PC-9 (cell line): ENCODE measurements at regions of chr12 and their contacts with region 1.

Region 1: GRCh38 chr12:98516184-98516873 is 939 bp downstream of the TMPO start:
- DNase-seq: peak; percentile 65 to 80
- H3K4me3 ChIP-seq: peak overlapping the region; percentile 90
- H3K27ac ChIP-seq: peak overlapping the region; percentile 74
- H3K4me1 ChIP-seq: peaks cover 24% of the 10 kb centered on the region
- H3K27me3 ChIP-seq: no peaks in the 10 kb centered on the region
- CTCF ChIP-seq: peak; percentile 74

Region 2: DNA sequence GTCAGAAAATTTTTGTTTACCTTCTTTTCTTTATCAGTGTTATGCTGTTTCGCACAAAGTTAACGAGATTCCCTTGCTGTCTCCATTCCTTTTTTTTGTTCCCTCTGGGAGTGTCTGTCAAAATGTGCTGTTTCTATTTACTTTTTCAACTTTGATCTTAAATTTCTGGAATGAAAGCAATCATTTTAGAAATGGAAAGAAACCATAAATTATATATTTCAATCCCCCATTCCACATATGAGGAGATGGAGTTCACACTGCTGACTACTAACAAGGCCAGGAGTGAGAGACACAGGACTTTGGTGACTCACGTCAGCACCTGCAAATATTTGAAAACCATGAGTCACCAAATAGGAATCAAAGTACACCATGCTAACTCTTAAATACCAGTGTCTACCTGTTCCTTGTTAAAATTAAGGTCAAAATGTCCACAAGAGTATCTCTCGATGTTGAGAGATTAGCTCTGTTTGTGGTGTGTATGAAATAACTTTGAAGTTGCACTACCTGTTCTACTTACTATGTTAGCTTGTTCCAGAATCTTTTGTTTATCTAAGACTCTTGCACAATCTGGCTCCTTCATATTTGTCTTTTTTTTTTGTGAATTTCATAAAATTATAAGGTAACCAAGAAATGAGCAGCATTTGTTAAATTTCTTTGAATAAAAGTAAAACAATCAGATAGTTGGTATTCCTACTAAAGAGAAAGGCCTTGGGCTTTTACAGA is 947.7 kb before region 1 on chr12:
- CTCF ChIA-PET with region 1: no interaction called
- POLR2A ChIA-PET with region 1: interaction called, 34 read pairs
- intact Hi-C with region 1: no loop called
- DNase-seq: peak; percentile 57 to 99
- H3K4me3 ChIP-seq: peak overlapping the region; percentile 17; the same call in 1 of the 2 replicates
- H3K27ac ChIP-seq: peak overlapping the region; percentile 75
- H3K4me1 ChIP-seq: peaks cover 51% of the 10 kb centered on the region
- H3K27me3 ChIP-seq: no peaks in the 10 kb centered on the region
- CTCF ChIP-seq: no peak

Region 3: DNA sequence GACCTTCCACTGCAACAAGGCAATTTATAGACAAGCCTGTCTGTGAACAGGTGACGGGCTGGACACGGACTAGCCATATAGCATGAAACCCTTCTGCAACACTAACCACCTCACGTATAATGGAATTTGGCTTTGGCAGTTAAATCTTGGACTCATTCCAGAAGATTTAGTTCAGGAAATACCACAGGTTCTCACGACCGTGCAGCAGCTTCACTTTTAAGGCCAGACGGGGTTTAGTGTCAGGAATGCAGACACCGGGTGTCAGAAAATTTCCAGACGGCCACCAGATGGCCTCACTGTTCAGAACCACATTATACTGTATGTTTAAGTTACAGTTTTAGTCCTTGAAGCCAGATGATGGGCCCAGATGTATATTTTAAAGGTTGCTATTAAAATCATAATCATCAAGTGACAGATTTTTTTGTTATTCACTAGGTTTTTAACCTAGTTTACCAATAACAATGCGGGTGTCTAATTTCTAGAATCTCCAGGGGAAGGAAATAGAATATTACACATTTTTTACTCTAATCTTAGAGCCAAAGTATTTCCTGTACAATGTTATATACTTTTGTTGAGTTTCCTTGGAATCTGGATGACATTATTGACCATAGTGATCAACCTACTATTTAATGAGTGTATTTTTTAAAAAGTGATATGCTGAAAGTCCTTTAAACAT is 91.5 kb before region 1 on chr12:
- CTCF ChIA-PET with region 1: interaction called, 4 read pairs
- POLR2A ChIA-PET with region 1: no interaction called
- intact Hi-C with region 1: loop called (anchors 1 kb)
- DNase-seq: peak; percentile 83 to 91
- H3K4me3 ChIP-seq: no peak overlapping the region
- H3K27ac ChIP-seq: 0 out of 2 replicates have a peak overlapping the region, but pooled peaks have one; percentile 16
- H3K4me1 ChIP-seq: peaks cover 6% of the 10 kb centered on the region
- H3K27me3 ChIP-seq: no peaks in the 10 kb centered on the region
- CTCF ChIP-seq: peak; percentile 78

Region 4: DNA sequence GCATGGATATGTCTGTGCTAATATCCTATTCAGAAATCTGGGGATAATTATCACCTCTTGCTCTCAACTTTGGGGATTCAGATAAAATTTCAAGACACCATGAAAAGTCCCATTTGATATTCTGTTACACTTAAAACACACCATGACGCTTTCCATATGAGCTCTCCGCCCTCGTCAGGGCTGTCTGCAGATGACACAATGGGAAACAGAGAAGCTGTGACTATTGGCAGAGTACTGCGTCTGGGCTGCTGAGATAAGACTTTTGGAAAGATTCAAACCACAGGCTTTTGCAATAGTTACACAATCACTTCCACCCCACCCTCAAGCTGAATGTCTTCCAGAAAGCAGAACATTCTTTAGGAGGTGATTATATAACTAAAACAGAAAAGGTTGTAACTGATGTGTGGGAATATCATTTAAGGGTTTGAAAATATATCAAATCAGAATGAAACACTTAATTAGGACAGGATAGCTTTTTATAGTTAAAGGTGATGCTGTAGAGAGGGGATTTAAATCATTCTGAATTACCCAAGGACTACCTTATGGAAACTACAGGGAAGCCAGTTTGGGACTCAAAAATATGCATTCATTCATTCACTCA is 76.2 kb before region 1 on chr12:
- CTCF ChIA-PET with region 1: no interaction called
- POLR2A ChIA-PET with region 1: interaction called, 18 read pairs
- intact Hi-C with region 1: no loop called
- DNase-seq: peak; percentile 65 to 88
- H3K4me3 ChIP-seq: no peak overlapping the region
- H3K27ac ChIP-seq: no peak overlapping the region
- H3K4me1 ChIP-seq: peaks cover 8% of the 10 kb centered on the region
- H3K27me3 ChIP-seq: no peaks in the 10 kb centered on the region
- CTCF ChIP-seq: no peak

Region 5: GRCh38 chr12:98503592-98504367 is 12.5 kb before region 1 on chr12:
- CTCF ChIA-PET with region 1: no interaction called
- POLR2A ChIA-PET with region 1: interaction called, 32 read pairs
- intact Hi-C with region 1: loop called (anchors 1 kb)
- DNase-seq: peak; percentile 73 to 88
- H3K4me3 ChIP-seq: peak overlapping the region; percentile 75
- H3K27ac ChIP-seq: peak overlapping the region; percentile 79
- H3K4me1 ChIP-seq: no peaks in the 10 kb centered on the region
- H3K27me3 ChIP-seq: no peaks in the 10 kb centered on the region
- CTCF ChIP-seq: no peak